Dorsolateral prefrontal cortex (tissue), 120 donors: ENCODE measurements at regions of chr16 and their contacts with region 1.

Region 1: DNA sequence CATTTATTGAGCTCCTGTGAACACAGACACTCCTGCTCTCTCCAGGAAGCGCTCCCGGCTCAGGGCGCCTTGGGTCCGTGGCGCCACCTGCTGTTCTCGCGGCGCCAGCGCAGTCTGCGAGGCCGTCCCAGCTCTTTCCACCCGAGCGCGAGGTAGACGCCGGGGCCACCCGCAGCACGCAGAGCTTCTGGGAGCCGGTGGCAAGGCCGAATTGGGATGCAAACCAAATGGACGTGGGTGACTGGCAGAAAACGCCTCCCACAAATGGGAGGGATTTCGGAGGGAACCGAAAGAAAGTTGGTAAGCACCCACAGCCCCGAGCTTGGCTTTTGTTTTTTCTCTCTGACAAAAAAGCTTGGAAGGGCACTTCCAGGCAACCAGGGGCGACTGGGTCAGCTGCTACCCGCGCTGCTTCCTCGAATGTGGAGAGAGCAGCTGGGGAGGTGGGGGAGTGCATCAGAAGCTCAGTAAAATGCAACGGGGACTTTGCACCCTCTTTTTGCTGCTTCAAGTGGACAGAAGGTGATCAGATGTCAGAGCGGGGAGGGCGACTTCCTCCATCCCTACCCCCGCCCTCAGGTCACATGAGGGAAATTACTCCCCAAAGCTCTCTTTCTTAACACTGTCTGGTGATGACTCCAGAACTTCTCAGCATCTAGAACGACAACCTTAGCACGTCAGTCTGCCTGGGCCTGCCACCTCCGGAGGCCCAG is 13.5 kb upstream of the N4BP1 start:
- DNase-seq: peak; percentile 56 to 88 (median 74)
- H3K4me3 ChIP-seq: peak overlapping the region; percentile 7 to 72 (median 54)
- H3K27ac ChIP-seq: peak overlapping the region in 46 of 59 donors; percentile 3 to 88 (median 57)
- H3K27me3 ChIP-seq: no peaks in the 10 kb centered on the region
- CTCF ChIP-seq: peak; percentile 86 to 98 (median 95)

Region 2: GRCh38 chr16:48244080-48244862 is 379.2 kb before region 1 on chr16 and contains the start of gene LONP2:
- intact Hi-C with region 1: loop called (anchors 10 kb)
- DNase-seq: peak; percentile 84 to 96 (median 92)
- H3K4me3 ChIP-seq: peak within 1 kb of the TSS; percentile 62 to 99 (median 93)
- H3K27ac ChIP-seq: peak within 1 kb of the TSS in 58 of 59 donors; percentile 34 to 95 (median 86)
- H3K27me3 ChIP-seq: no peaks in the 10 kb centered on the region
- CTCF ChIP-seq: peak in 33 of 56 donors; percentile 9 to 52 (median 32)
- total RNA-seq, gene LONP2: 68.2 to 129 (median 106) TPM

Region 3: GRCh38 chr16:48353565-48354163 is 269.8 kb before region 1 on chr16:
- intact Hi-C with region 1: loop called in 1 of 2 experiments (anchors 5 kb)
- DNase-seq: peak in 3 of 10 donors; percentile 34 to 51 (median 43)
- H3K4me3 ChIP-seq: no peak overlapping the region
- H3K27ac ChIP-seq: peak overlapping the region in 27 of 59 donors; percentile 2 to 65 (median 33)
- H3K27me3 ChIP-seq: no peaks in the 10 kb centered on the region
- CTCF ChIP-seq: peak; percentile 51 to 92 (median 84)

Region 4: DNA sequence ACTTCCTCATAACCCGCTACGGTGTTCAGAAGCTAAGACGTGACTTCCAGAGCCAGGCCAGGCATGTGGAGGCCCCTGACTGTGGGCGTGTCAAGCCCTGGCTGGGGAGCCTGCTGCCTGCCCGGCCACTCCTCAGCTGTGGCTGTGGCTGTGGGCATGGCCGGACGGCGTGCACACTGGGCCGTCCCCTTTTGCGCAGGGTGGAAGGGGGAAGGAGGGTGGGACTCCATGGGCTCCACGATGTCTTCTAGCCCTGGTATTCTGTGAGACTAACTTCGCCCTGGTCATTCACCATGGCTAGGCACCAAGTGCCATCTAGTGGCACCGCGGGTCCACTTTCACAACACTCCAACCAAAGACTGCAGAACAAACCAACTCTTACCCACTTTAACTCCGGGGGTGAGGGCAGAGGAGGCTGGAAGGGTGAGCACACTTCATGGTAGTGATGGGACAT is 81.4 kb before region 1 on chr16:
- intact Hi-C with region 1: loop called in 1 of 2 experiments (anchors 5 kb)
- DNase-seq: peak in 9 of 10 donors; percentile 53 to 80 (median 78)
- H3K4me3 ChIP-seq: no peak overlapping the region
- H3K27ac ChIP-seq: peak overlapping the region in 45 of 59 donors; percentile 3 to 72 (median 45)
- H3K27me3 ChIP-seq: no peaks in the 10 kb centered on the region
- CTCF ChIP-seq: peak; percentile 39 to 90 (median 78)